ENCODE measurements at regions of chr1 and their contacts with region 1.

Region 1: GRCh38 chr1:93304716-93305138 is 41.0 kb upstream of the DR1 start:
- H3K4me3 ChIP-seq: no peak overlapping the region
- H3K27ac ChIP-seq: no peak overlapping the region
- H3K4me1 ChIP-seq: no peaks in the 10 kb centered on the region
- CTCF ChIP-seq: no peak

Region 2: GRCh38 chr1:93317207-93317606 is 12.5 kb after region 1 on chr1:
- CTCF ChIA-PET with region 1: interaction called, 13 read pairs
- POLR2A ChIA-PET with region 1: no interaction called
- H3K4me3 ChIP-seq: no peak overlapping the region
- H3K27ac ChIP-seq: no peak overlapping the region
- H3K4me1 ChIP-seq: no peaks in the 10 kb centered on the region
- CTCF ChIP-seq: no peak

Region 3: GRCh38 chr1:93328809-93329760 is 24.4 kb after region 1 on chr1:
- CTCF ChIA-PET with region 1: interaction called, 16 read pairs
- POLR2A ChIA-PET with region 1: no interaction called
- H3K4me3 ChIP-seq: no peak overlapping the region
- H3K27ac ChIP-seq: no peak overlapping the region
- H3K4me1 ChIP-seq: peaks cover 6% of the 10 kb centered on the region; the same call in 1 of the 2 replicates
- CTCF ChIP-seq: no peak

Region 4: GRCh38 chr1:93362237-93362636 is 57.5 kb after region 1 on chr1:
- CTCF ChIA-PET with region 1: interaction called, 12 read pairs
- POLR2A ChIA-PET with region 1: no interaction called
- H3K4me3 ChIP-seq: no peak overlapping the region
- H3K27ac ChIP-seq: no peak overlapping the region
- H3K4me1 ChIP-seq: peaks cover 6% of the 10 kb centered on the region; the same call in 1 of the 2 replicates
- CTCF ChIP-seq: no peak

Region 5: GRCh38 chr1:93411000-93411399 is 106.3 kb after region 1 on chr1:
- CTCF ChIA-PET with region 1: no interaction called
- POLR2A ChIA-PET with region 1: no interaction called
- H3K4me3 ChIP-seq: no peak overlapping the region
- H3K27ac ChIP-seq: no peak overlapping the region
- H3K4me1 ChIP-seq: no peaks in the 10 kb centered on the region
- CTCF ChIP-seq: no peak

Region 6: DNA sequence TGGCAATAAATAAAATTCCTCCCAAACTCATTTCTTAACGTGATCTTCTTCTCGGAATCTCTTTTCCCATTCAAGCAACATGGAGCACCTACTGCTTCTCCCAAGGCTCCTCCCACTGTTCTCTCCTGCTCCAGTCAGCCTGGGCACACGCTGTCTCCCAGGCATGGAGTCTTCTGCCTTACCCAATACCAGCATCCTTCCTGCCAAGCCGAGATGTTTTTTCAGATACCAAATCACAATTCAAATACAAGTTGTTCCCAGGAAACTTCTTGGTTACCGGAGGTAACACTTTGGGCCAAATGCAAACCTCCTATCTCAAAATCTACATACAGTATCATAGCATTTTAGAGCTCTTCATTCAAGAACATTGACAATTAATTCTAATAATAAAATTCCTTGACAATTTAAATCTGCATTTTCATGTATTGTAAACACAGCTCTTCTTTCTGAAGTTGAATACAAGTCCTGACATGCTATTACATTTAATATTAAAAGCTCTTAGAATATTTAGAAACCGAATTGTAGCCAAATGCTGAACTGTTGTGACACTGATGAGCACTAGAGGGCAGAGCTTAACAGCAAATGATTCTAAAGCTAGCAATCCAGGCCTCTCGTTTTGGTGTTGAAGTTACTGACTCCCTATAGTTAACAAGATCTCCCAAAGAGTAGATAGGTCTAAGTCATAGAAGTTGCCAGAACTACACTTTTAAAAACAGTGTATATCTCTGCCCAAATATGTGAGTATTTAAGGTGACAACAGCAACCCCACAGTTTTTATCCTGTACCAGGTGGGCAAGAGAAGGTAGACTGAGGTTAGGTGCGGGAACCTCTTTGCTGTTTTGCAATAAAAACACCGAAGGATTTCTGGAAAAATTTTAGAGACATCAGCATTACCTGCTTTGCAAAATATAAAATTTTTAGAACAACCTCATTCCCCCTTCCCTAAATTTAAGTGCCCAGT is 324.7 kb after region 1 on chr1:
- CTCF ChIA-PET with region 1: interaction called, 21 read pairs
- POLR2A ChIA-PET with region 1: no interaction called
- H3K4me3 ChIP-seq: no peak overlapping the region
- H3K27ac ChIP-seq: no peak overlapping the region
- H3K4me1 ChIP-seq: 0 out of 2 replicates have a peak, but pooled peaks cover 2% of the 10 kb centered on the region
- CTCF ChIP-seq: 0 out of 2 replicates have a peak, but pooled peaks have one; percentile 17

Region 7: GRCh38 chr1:93846211-93846991 is 541.7 kb after region 1 on chr1:
- CTCF ChIA-PET with region 1: interaction called, 13 read pairs
- POLR2A ChIA-PET with region 1: no interaction called
- H3K4me3 ChIP-seq: peak overlapping the region; percentile 88
- H3K27ac ChIP-seq: peak overlapping the region; percentile 91
- H3K4me1 ChIP-seq: peaks cover 3% of the 10 kb centered on the region; the same call in 1 of the 2 replicates
- CTCF ChIP-seq: peak; percentile 67